AG04450 (cell line): ENCODE measurements at regions of chr1 and their contacts with region 1.

Region 1: GRCh38 chr1:175023043-175023921 is at the start of gene MRPS14:
- DNase-seq: peak; percentile 98
- H3K4me3 ChIP-seq: peak within 1 kb of the TSS; percentile 96
- H3K27ac ChIP-seq: peak within 1 kb of the TSS; percentile 80
- H3K27me3 ChIP-seq: no peaks in the 10 kb centered on the region
- CTCF ChIP-seq: no peak
- polyA plus RNA-seq, gene MRPS14: 37.4 and 40.8 TPM in 2 replicates

Region 2: GRCh38 chr1:175062858-175063257 is 39.6 kb after region 1 on chr1:
- CTCF ChIA-PET with region 1: no interaction called
- POLR2A ChIA-PET with region 1: no interaction called
- DNase-seq: no peak
- H3K4me3 ChIP-seq: no peak overlapping the region
- H3K27ac ChIP-seq: no peak overlapping the region
- H3K27me3 ChIP-seq: no peaks in the 10 kb centered on the region
- CTCF ChIP-seq: no peak

Region 3: GRCh38 chr1:175129997-175130648 is 106.8 kb after region 1 on chr1:
- CTCF ChIA-PET with region 1: interaction called, 102 read pairs
- POLR2A ChIA-PET with region 1: interaction called, 6 read pairs
- DNase-seq: no peak
- H3K4me3 ChIP-seq: no peak overlapping the region
- H3K27ac ChIP-seq: no peak overlapping the region
- H3K27me3 ChIP-seq: no peaks in the 10 kb centered on the region
- CTCF ChIP-seq: no peak